KBM-7 (cell line): ENCODE measurements at regions of chr17 and their contacts with region 1.

Region 1: DNA sequence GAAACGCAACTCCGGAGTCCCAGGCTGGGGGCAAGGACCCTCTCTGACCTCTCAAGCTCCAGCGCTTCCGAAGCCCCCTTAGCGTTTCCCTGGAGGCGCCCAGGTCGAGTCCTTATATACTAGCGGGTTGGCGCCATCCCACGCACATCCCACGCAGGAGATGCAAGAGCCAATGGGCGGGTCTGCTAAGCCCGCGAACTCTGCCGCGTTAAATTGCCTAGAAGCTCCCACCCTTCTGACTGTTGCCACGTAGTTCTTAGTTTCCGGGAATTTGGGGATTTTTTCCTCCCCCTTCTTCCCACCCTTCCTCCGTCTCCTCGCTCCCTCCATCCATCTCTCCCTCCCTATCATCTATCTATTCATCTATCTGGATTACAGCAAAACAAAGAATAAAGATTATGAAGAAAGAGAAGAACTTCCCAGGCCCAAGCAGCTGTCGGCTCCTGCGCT is at the start of gene SLFN11:
- DNase-seq: peak; percentile 88

Region 2: GRCh38 chr17:34961093-34961911 is 412.3 kb before region 1 on chr17 and contains the starts of genes CCT6B and ZNF830:
- in situ Hi-C with region 1: no loop called
- DNase-seq: peak; percentile 92

Region 3: DNA sequence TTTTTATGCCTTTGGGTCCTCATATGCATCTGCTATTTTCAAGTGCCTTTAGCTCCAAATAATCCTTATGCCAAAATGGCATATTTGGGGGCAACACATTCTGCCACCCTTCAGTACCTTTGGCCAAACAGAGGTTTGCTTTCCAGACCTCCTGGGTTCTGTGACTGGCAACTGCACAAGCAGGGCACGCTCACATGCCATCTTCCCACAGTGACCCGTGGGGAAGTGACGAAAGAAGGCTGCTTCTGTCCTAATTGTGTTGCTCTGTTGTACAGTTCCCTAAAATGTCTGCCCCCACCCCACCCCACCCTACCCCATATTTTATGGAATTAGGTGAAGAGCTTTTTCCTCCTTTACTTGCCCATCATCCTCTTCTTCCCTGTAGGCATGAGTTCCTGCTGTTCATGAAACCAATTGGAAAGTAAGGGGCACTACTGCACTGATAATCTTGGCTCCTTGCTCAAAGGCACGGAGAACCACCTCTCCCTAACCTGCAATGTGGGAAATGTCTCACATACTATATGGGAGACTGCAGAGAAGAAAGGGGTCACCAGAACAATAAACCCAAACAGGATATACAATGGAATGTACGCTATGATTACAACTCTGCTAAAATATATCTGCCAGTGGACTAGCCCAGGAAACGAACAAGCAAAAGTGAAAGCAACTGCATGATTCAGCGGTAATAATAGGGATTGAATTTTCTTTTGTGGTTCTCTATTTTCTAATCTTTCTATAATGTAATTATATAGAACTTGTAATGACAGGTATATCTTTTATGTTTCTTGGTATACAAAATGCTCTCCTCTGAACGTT is 167.2 kb after region 1 on chr17:
- in situ Hi-C with region 1: loop called (anchors 25 kb)
- DNase-seq: peak; percentile 58